Heart right ventricle (tissue), 16 donors: ENCODE measurements at regions of chr6 and their contacts with region 1.

Region 1: DNA sequence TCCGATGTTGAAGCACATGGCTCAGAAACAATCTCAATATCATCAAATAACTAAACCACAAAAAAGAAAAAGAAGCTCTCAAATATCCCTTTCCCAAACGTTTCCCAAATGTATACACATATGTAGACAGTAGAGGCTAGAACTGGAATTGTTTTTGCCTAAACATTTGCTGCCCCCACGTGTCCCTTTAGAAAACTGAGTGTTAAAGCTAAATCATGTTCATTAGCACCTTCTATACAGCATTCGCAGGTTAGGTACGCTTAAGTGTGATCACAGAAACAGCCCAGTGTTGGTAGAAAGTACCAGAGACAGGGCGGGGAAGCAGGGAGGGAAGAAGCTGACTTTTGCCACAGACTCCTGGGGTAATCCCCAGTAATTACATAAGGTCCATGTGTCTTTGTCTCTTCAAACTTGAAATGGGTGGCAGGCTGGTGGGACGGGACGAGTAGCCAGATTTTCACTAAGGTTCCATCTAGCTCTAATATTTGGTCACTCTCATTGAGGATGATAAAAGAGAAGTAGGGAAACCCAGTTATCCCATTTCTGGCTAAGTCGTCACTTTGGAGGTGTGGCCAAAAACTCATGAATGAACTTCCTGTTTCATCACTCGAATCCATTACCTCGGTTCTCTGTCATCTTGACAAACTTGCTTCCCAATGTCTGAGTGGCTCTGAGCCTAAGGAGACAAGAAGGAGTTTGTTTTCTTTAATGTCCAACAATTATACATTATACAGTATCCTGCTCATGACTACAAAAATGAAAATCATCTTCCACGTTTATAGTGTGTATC is 15.0 kb upstream of the TFAP2A start:
- DNase-seq: no peak
- ATAC-seq: peak in 3 of 8 donors; percentile 46 to 60 (median 50)
- H3K4me3 ChIP-seq: no peak overlapping the region
- H3K27ac ChIP-seq: no peak overlapping the region
- H3K4me1 ChIP-seq: peaks cover 0 to 20% (median 12%) of the 10 kb centered on the region in 9 donors
- H3K27me3 ChIP-seq: peaks cover 3 to 71% (median 63%) of the 10 kb centered on the region in 7 donors
- CTCF ChIP-seq: peak in 8 of 9 donors; percentile 17 to 60 (median 50)

Region 2: DNA sequence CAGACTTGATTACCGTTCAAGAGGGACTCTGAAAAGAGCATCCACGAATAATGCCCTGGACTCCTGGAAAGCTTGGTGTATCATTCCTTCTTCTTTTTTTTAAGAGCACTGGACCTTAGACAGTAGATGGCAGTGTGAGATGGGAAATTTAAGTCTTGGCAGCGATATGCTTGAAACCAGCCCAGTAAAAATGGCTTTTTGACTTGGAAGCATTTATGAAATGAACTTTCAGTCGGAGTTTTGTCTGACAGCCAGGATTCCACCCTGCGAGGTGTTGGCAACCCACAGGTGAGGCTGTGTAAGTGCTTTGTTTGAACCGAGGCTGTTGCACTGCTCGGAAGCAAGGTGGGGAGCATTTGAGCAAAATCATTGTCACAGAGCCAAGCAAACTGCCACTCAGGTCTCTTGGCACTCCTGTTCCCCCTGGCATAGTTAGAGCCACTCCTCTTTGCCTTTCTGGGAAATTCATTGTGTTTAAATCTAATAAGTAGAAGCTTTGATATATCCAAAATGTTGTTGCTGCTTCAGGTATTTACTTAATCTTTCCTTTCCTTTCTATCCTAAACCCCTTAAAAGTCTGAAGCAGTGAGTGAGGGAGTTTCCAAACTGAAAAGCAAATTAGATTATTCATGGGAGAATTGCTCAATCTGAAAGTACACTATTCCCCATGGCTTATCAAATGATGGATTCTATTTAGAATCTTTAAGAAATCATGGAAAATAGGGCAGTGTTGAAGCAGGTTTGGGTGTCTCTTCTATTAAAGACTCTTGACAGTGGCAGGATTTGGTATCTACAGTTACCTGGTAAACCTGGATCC is 1721.7 kb before region 1 on chr6:
- intact Hi-C with region 1: loop called in 2 of 10 experiments (anchors 5 to 10 kb)
- DNase-seq: no peak
- ATAC-seq: peak in 4 of 8 donors; percentile 46 to 71 (median 56)
- H3K4me3 ChIP-seq: peak overlapping the region in 6 of 10 donors; percentile 8 to 45 (median 27)
- H3K27ac ChIP-seq: no peak overlapping the region
- H3K4me1 ChIP-seq: peaks cover 0 to 4% (median 0%) of the 10 kb centered on the region in 9 donors
- H3K27me3 ChIP-seq: no peaks in the 10 kb centered on the region
- CTCF ChIP-seq: peak in 7 of 9 donors; percentile 34 to 53 (median 38)

Region 3: DNA sequence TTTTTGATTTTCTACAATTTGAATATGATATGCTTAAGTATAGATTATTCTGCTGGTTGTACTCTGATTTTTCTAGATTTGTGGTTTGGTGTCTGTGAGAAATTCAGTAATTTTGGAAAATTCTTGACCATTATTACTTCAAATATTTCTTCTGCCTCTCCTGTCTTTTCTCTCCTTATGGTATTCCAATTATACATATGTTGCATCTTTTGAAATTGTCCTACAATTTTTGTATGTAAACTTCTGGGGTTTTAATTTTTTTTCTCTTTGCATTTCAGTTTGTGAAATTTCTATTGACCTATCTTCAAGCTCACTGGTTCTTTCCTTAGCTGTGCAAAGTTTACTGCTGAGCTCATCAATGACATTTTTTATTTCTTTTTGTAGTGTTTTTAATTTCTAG is 1460.1 kb before region 1 on chr6:
- intact Hi-C with region 1: loop called in 1 of 10 experiments (anchors 10 kb)
- DNase-seq: no peak
- ATAC-seq: no peak
- H3K4me3 ChIP-seq: no peak overlapping the region
- H3K27ac ChIP-seq: no peak overlapping the region
- H3K4me1 ChIP-seq: no peaks in the 10 kb centered on the region
- H3K27me3 ChIP-seq: no peaks in the 10 kb centered on the region
- CTCF ChIP-seq: no peak

Region 4: DNA sequence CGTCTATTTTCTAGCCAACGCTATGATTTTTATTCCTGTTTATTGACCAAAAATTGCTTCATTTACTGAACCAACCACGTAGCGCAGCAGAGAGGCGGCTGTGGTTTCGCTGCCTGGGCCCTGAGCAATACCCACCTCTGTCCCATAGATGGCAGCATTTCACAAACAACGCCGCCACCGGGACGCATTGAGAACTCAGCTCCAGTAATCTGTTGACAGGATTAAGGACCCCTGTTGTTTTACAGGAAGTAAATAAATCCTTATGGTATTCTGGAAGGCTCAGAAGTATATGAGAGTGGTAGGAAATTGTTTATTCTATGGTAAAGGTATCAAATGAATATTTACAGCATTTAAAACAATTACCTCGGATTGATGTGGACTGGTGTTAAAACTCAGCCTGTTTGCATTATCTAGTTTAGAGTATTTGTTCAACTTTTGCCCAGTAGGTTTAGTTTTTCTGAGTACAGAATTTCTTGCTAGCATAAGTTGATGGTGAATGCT is 1446.6 kb before region 1 on chr6:
- intact Hi-C with region 1: loop called (anchors 5 to 10 kb)
- DNase-seq: peak; percentile 29 to 31
- ATAC-seq: peak in 6 of 8 donors; percentile 67 to 76 (median 70)
- H3K4me3 ChIP-seq: no peak overlapping the region
- H3K27ac ChIP-seq: no peak overlapping the region
- H3K4me1 ChIP-seq: peaks cover 0 to 7% (median 0%) of the 10 kb centered on the region in 9 donors
- H3K27me3 ChIP-seq: peaks cover 0 to 30% (median 4%) of the 10 kb centered on the region in 7 donors
- CTCF ChIP-seq: peak; percentile 55 to 96 (median 91)

Region 5: DNA sequence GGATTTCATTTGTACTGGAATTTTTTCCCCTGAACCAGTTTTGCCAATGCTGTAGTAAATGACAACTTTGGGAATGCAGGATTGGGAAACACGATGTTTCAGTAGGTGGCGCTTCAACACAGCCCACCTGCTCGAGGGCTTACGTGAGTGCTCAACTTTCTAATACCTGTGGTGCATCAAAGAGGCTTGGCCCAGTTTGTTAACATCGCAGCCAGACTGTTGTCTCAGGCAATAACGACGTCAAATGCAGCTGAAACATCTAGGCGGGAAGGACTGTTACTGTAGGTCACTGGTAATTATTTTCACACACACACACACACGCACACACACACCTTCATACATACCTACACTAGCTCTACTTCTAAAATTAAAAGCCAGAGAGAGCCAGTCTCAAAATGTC is 1179.0 kb before region 1 on chr6:
- intact Hi-C with region 1: loop called in 3 of 10 experiments (anchors 5 to 10 kb)
- DNase-seq: peak in 1 of 2 donors; percentile 11
- ATAC-seq: peak in 1 of 8 donors; percentile 35
- H3K4me3 ChIP-seq: no peak overlapping the region
- H3K27ac ChIP-seq: no peak overlapping the region
- H3K4me1 ChIP-seq: no peaks in the 10 kb centered on the region
- H3K27me3 ChIP-seq: no peaks in the 10 kb centered on the region
- CTCF ChIP-seq: peak in 8 of 9 donors; percentile 19 to 54 (median 50)

Region 6: DNA sequence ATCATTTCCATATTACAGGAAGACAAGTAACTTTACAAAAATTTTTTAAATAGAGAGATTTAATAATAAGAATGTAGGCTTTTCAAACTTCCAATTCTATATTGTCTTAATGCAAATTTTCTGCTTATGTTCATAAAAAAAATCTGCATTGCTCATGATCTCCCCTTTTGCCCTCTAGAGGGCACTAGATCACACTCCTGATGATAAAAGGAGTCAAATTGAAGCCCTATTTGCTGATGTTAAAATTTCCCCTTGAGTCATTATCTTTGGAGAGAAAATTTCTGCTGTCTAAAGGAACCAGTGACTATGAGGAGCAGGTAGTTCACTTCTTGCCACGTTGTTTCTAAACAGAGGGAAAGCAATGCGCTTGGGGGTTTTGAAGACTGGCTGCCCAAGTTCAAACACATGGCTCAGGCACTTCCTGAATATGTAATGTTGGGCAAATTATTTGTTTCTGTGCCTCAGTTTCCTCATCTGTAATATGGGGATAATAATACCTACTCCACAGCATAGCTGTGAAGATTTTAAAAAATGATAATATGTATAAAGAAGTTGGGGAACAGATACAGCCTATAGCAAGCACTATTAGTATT is 889.2 kb before region 1 on chr6:
- intact Hi-C with region 1: loop called in 6 of 10 experiments (anchors 5 to 10 kb)
- DNase-seq: no peak
- ATAC-seq: no peak
- H3K4me3 ChIP-seq: no peak overlapping the region
- H3K27ac ChIP-seq: no peak overlapping the region
- H3K4me1 ChIP-seq: no peaks in the 10 kb centered on the region
- H3K27me3 ChIP-seq: peaks cover 0 to 3% (median 0%) of the 10 kb centered on the region in 7 donors
- CTCF ChIP-seq: peak; percentile 22 to 64 (median 51)

Region 7: GRCh38 chr6:10030942-10031537 is 398.8 kb before region 1 on chr6:
- intact Hi-C with region 1: loop called in 1 of 10 experiments (anchors 10 kb)
- DNase-seq: no peak
- ATAC-seq: no peak
- H3K4me3 ChIP-seq: no peak overlapping the region
- H3K27ac ChIP-seq: no peak overlapping the region
- H3K4me1 ChIP-seq: no peaks in the 10 kb centered on the region
- H3K27me3 ChIP-seq: peaks cover 0 to 15% (median 6%) of the 10 kb centered on the region in 7 donors
- CTCF ChIP-seq: peak; percentile 11 to 55 (median 41)

Region 8: DNA sequence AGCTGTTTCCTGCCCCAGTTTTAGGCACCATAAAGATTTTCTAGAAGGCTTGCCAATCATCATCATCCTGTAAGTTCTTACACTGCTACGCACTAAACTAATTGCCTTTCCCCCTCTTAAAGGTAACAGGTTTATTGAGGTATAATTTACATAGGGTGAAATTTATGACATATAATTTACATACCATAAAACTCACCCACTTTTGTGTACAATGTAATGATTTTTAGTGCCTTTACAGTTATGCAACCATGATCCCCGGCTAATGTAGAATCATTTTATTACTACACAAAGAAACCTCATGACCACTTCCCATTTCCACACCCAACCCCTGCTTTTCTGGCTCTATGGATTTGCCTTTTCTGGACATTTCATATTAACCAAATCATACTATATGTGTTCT is 112.4 kb after region 1 on chr6:
- intact Hi-C with region 1: no loop called
- DNase-seq: no peak
- ATAC-seq: no peak
- H3K4me3 ChIP-seq: no peak overlapping the region
- H3K27ac ChIP-seq: peak overlapping the region in 2 of 10 donors; percentile 10 to 44
- H3K4me1 ChIP-seq: peaks cover 0 to 40% (median 8%) of the 10 kb centered on the region in 9 donors
- H3K27me3 ChIP-seq: no peaks in the 10 kb centered on the region
- CTCF ChIP-seq: no peak